CD4-positive, alpha-beta memory T cell (primary cell): ENCODE measurements at regions of chr17 and their contacts with region 1.

Region 1: DNA sequence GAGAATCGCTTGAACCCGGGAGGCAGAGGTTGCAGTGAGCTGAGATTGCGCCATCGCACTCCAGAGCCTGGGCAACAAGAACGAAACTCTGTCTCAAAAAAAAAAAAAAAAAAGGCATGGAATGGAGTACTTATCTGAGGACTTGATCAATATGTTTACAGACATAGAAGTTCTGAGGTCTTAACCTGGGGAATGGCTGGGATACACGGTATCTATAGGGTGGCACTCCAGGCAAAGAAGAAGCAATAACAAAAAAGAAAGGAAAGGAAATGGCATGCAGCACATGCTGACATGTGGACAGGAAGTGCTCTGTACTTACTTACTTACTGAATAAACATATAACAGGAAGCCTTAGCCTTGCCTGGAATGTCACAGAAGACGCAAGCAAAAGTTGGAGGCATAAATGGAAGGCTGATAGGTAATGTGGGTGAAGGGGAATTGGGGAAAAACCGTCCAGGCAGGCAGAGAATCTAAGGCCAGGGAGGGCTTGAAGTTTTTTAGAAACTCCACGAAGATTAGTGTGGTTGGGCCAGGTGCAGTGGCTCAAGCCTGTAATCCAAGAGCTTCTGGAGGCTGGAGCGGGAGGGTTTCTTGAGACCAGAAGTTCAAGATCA is 10.1 kb upstream of the SPOP start:
- DNase-seq: peak in 4 of 5 donors; percentile 29 to 54 (median 42)
- H3K4me3 ChIP-seq: no peak overlapping the region
- H3K4me3 Mint-ChIP-seq: peak overlapping the region; percentile 82 to 94 (median 90)
- H3K27ac ChIP-seq: peak overlapping the region; percentile 64
- H3K27ac Mint-ChIP-seq: peak overlapping the region; percentile 7 to 99 (median 96)
- H3K4me1 ChIP-seq: peaks cover 30% of the 10 kb centered on the region
- H3K4me1 Mint-ChIP-seq: peaks cover 26 to 55% (median 29%) of the 10 kb centered on the region in 4 donors
- H3K27me3 ChIP-seq: no peaks in the 10 kb centered on the region
- H3K27me3 Mint-ChIP-seq: no peaks in the 10 kb centered on the region

Region 2: DNA sequence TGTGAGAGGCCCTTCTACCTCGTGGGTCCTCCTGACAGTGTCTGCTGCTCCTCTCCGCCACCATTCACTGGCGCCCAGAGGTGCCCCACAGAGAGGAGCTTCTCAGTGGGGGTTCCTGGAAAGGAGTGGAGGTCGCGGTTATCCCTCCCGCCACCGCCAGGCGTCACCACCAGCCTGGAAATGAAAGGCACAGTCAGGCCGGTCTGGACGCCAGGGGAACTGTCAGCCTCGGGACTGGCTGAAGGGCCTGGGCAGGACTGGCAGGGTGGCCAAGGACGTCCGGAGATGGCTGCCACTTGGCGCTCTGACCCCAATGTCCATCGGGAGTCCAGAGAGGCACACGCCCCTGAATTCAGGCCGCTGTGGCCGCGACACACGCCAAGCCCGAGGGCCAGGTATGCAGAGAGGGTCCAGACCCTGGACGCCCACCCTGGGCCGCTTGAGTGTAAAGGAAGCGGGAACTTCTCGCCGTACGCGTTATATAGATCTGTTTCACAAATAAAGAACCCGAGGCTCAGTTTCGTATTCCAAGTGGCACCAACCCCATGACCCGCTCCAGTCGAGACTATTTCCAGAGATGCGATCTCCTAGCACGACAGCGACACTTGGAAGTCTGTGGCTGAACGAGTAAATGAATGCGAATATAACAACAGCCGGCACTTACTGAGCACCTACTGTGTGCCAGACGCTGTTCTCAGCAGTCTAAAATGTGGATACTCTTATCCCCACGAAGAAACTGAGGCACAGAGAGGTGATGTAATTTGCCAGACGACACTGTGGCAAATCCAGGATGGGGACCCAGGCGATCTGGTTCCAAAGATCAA is 119.9 kb before region 1 on chr17:
- CTCF ChIA-PET with region 1: interaction called, 219 read pairs
- POLR2A ChIA-PET with region 1: interaction called, 10 read pairs
- intact Hi-C with region 1: no loop called
- DNase-seq: peak; percentile 68 to 77 (median 74)
- H3K4me3 ChIP-seq: peak overlapping the region in 1 of 2 donors; percentile 56
- H3K4me3 Mint-ChIP-seq: peak overlapping the region; percentile 28 to 82 (median 60)
- H3K27ac ChIP-seq: no peak overlapping the region
- H3K27ac Mint-ChIP-seq: peak overlapping the region in 2 of 7 donors; percentile 46 to 54
- H3K4me1 ChIP-seq: peaks cover 10% of the 10 kb centered on the region
- H3K4me1 Mint-ChIP-seq: peaks cover 8 to 29% (median 19%) of the 10 kb centered on the region in 4 donors
- H3K27me3 ChIP-seq: no peaks in the 10 kb centered on the region
- H3K27me3 Mint-ChIP-seq: peaks cover 6 to 11% of the 10 kb centered on the region in 2 donors